ENCODE measurements at regions of chr21 and their contacts with region 1.

Region 1: DNA sequence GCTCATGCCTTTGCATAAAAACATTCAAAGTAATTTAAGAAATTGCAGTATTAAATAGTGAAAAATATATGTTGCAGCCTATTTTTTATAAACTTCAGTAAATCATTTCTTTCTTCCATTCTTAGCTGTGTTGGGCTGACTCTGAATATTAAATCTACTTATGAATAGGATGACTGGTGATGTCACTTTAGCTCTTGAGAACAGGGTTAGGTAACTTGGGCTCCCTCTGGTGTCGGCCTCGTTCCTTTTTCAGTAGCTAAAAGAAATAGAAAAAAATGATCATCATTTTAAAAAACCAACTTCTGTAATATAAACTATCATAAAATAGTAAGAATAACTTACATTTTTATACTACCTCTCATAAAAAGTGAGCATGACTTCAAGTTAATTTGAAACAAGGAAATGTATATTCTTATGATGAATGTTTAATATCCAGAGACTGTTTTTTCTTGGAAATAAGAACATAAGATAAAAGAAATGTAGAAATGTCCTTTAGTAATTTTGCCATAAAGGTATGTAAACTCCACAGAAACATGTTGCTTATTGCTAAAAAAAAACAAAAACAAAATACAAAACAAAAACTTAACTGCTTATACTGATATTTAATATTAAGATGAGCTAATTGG is 26.8 kb upstream of the NCAM2 start:
- DNase-seq: peak; percentile 19 to 93 (median 81)
- H3K4me3 ChIP-seq: peak overlapping the region in 7 of 59 donors; percentile 1 to 35 (median 10)
- H3K27ac ChIP-seq: peak overlapping the region; percentile 19 to 97 (median 91)
- H3K27me3 ChIP-seq: no peaks in the 10 kb centered on the region
- CTCF ChIP-seq: peak; percentile 51 to 90 (median 76)

Region 2: GRCh38 chr21:19553919-19554615 is 1417.3 kb before region 1 on chr21:
- intact Hi-C with region 1: loop called in 1 of 2 experiments (anchors 10 kb)
- DNase-seq: no peak
- H3K4me3 ChIP-seq: no peak overlapping the region
- H3K27ac ChIP-seq: peak overlapping the region in 3 of 59 donors; percentile 10 to 29 (median 20)
- H3K27me3 ChIP-seq: no peaks in the 10 kb centered on the region
- CTCF ChIP-seq: no peak

Region 3: GRCh38 chr21:20882462-20883407 is 88.7 kb before region 1 on chr21:
- intact Hi-C with region 1: loop called in 1 of 2 experiments (anchors 5 kb)
- DNase-seq: peak in 5 of 10 donors; percentile 5 to 66 (median 37)
- H3K4me3 ChIP-seq: peak overlapping the region in 1 of 59 donors; percentile 12
- H3K27ac ChIP-seq: peak overlapping the region in 17 of 59 donors; percentile 3 to 53 (median 30)
- H3K27me3 ChIP-seq: no peaks in the 10 kb centered on the region
- CTCF ChIP-seq: peak; percentile 45 to 78 (median 66)

Region 4: GRCh38 chr21:20902511-20902910 is 68.9 kb before region 1 on chr21:
- intact Hi-C with region 1: loop called (anchors 2 kb)
- DNase-seq: no peak
- H3K4me3 ChIP-seq: peak overlapping the region in 37 of 59 donors; percentile 0 to 47 (median 19)
- H3K27ac ChIP-seq: peak overlapping the region in 58 of 59 donors; percentile 71 to 99 (median 95)
- H3K27me3 ChIP-seq: no peaks in the 10 kb centered on the region
- CTCF ChIP-seq: peak in 2 of 56 donors; percentile 5 to 12

Region 5: GRCh38 chr21:20946701-20947100 is 24.7 kb before region 1 on chr21:
- intact Hi-C with region 1: loop called in 1 of 2 experiments (anchors 2 kb)
- DNase-seq: no peak
- H3K4me3 ChIP-seq: no peak overlapping the region
- H3K27ac ChIP-seq: no peak overlapping the region
- H3K27me3 ChIP-seq: no peaks in the 10 kb centered on the region
- CTCF ChIP-seq: no peak

Region 6: DNA sequence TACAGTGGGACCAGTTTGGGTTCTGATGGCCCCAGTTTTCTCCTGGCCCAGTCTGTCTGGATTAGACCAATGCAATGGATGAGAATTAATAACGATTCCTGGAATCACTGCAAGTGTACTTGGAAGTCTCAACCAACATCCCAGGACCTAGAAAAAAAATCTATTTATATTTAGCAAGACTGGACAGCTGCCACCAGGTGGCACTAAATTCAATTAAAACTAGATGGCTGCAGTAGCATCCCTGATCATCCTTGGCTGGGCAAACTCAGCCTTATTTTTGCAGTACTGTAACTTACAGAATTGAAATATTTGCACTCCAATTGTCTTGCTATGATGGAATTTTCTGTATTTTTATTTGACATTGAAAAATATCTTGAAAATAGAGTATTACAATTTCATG is 192.5 kb after region 1 on chr21:
- intact Hi-C with region 1: no loop called
- DNase-seq: peak in 3 of 10 donors; percentile 9 to 33 (median 29)
- H3K4me3 ChIP-seq: no peak overlapping the region
- H3K27ac ChIP-seq: no peak overlapping the region
- H3K27me3 ChIP-seq: no peaks in the 10 kb centered on the region
- CTCF ChIP-seq: peak; percentile 42 to 76 (median 64)

Measured in dorsolateral prefrontal cortex (tissue), 120 donors.